Right ventricle myocardium inferior (tissue), 1 donor: ENCODE measurements at regions of chr9 and their contacts with region 1.

Region 1: GRCh38 chr9:100784755-100785154 is 206.9 kb downstream of the CAVIN4 start:
- DNase-seq: no peak
- ATAC-seq: no peak

Region 2: GRCh38 chr9:100639854-100640253 is 144.9 kb before region 1 on chr9:
- intact Hi-C with region 1: no loop called
- DNase-seq: no peak
- ATAC-seq: no peak

Region 3: GRCh38 chr9:100811643-100812042 is 26.9 kb after region 1 on chr9:
- intact Hi-C with region 1: loop called (anchors 2 kb)
- DNase-seq: no peak
- ATAC-seq: no peak